Left ventricle myocardium inferior (tissue), 1 donor: ENCODE measurements at regions of chr4 and their contacts with region 1.

Region 1: GRCh38 chr4:72468904-72469502 is 100.0 kb downstream of the ADAMTS3 start:
- DNase-seq: no peak
- H3K4me3 ChIP-seq: no peak overlapping the region
- H3K27ac ChIP-seq: no peak overlapping the region
- H3K4me1 ChIP-seq: no peaks in the 10 kb centered on the region
- H3K27me3 ChIP-seq: no peaks in the 10 kb centered on the region
- CTCF ChIP-seq: peak; percentile 70

Region 2: GRCh38 chr4:72295966-72296557 is 172.9 kb before region 1 on chr4:
- intact Hi-C with region 1: loop called (anchors 10 kb)
- DNase-seq: no peak
- H3K4me3 ChIP-seq: no peak overlapping the region
- H3K27ac ChIP-seq: no peak overlapping the region
- H3K4me1 ChIP-seq: no peaks in the 10 kb centered on the region
- H3K27me3 ChIP-seq: no peaks in the 10 kb centered on the region
- CTCF ChIP-seq: peak; percentile 75

Region 3: DNA sequence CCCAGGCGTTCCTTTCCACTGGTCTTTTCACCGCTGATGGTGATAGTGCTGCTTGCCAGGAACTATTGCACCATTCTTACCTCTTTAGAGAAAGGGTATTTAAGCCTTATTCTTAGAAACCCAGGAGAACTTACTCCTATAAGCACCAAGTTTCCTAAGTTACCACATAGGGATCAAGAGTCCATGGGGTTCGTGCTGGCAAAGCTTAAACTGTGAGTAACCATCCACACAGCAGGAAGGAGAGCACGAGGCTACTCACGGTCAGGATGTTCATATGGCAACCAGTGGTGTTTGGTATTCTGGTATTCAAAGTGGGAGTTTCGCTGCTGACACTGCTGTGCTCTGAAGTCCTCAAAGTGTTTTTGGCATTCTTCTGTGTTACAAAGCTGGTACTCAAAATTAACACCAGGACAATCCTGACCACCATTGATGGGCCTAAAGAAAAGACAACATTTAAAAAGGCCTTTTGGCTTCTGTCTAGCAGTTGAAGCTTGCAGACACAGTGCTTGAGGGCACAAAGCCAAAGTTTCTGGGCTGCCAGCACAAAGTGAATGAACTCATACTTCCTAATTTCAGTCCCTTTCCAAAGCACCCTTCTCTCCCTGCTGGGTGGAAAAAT is 156.9 kb before region 1 on chr4:
- intact Hi-C with region 1: loop called (anchors 5 kb)
- DNase-seq: peak; percentile 79
- H3K4me3 ChIP-seq: no peak overlapping the region
- H3K27ac ChIP-seq: peak overlapping the region; percentile 75
- H3K4me1 ChIP-seq: peaks cover 36% of the 10 kb centered on the region
- H3K27me3 ChIP-seq: no peaks in the 10 kb centered on the region
- CTCF ChIP-seq: no peak